Heart right ventricle (tissue), 16 donors: ENCODE measurements at regions of chr3 and their contacts with region 1.

Region 1: DNA sequence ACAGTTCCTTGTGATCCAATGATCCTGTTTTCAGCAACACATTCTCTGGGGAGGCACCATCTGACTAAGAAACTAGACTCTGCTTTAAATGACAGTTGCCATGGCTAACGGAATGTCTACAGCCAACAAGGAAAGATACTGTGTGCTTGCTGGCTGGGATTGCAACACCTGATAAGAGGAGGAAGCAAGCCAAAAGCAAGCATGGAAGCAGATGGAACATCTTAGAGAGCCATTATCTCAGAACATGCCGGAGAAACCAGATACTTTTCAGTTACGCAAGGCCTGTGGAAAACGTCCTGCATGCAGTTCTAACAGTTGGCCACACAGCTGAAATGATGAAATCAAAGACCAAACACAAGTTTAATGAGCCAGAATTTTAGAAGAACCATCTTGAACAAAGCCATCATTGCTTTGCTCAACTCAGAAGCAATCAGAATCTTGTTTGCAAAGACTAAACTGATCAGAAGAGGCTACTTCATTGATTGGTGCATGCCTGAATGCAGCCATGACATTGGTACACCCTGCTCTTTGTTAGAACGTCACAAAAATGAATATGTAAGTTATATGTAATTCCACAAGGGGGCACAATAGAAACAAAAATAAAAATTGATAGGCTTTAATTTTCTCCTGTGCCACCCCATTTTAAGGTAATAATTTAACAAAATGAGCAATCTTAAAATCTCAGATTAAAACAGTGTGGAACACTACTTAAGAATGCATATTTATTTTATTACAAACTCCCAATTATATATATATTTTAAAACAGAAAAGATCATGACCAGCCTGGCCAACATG is 50.8 kb downstream of the GXYLT2 start:
- DNase-seq: peak in 1 of 2 donors; percentile 69
- ATAC-seq: peak; percentile 84 to 96 (median 91)
- H3K4me3 ChIP-seq: no peak overlapping the region
- H3K27ac ChIP-seq: peak overlapping the region in 8 of 10 donors; percentile 2 to 61 (median 30)
- H3K4me1 ChIP-seq: peaks cover 0 to 27% (median 9%) of the 10 kb centered on the region in 9 donors
- H3K27me3 ChIP-seq: no peaks in the 10 kb centered on the region
- CTCF ChIP-seq: peak; percentile 34 to 77 (median 59)

Region 2: GRCh38 chr3:72797773-72798543 is 140.7 kb before region 1 on chr3:
- intact Hi-C with region 1: no loop called
- DNase-seq: peak; percentile 61 to 62
- ATAC-seq: peak; percentile 33 to 95 (median 80)
- H3K4me3 ChIP-seq: no peak overlapping the region
- H3K27ac ChIP-seq: peak overlapping the region in 5 of 10 donors; percentile 11 to 42 (median 29)
- H3K4me1 ChIP-seq: peaks cover 0 to 21% (median 8%) of the 10 kb centered on the region in 9 donors
- H3K27me3 ChIP-seq: no peaks in the 10 kb centered on the region
- CTCF ChIP-seq: no peak

Region 3: GRCh38 chr3:73056014-73056844 is 117.6 kb after region 1 on chr3:
- intact Hi-C with region 1: loop called in 9 of 10 experiments (anchors 1 to 5 kb)
- DNase-seq: no peak
- ATAC-seq: peak in 4 of 8 donors; percentile 55 to 82 (median 58)
- H3K4me3 ChIP-seq: no peak overlapping the region
- H3K27ac ChIP-seq: peak overlapping the region in 3 of 10 donors; percentile 23 to 33 (median 26)
- H3K4me1 ChIP-seq: peaks cover 0 to 43% (median 17%) of the 10 kb centered on the region in 9 donors
- H3K27me3 ChIP-seq: no peaks in the 10 kb centered on the region
- CTCF ChIP-seq: peak; percentile 29 to 70 (median 55)

Region 4: GRCh38 chr3:73070675-73071575 is 132.3 kb after region 1 on chr3:
- intact Hi-C with region 1: loop called in 1 of 10 experiments (anchors 5 kb)
- DNase-seq: no peak
- ATAC-seq: peak in 1 of 8 donors; percentile 15
- H3K4me3 ChIP-seq: no peak overlapping the region
- H3K27ac ChIP-seq: no peak overlapping the region
- H3K4me1 ChIP-seq: peaks cover 0 to 33% (median 14%) of the 10 kb centered on the region in 9 donors
- H3K27me3 ChIP-seq: no peaks in the 10 kb centered on the region
- CTCF ChIP-seq: no peak

Region 5: DNA sequence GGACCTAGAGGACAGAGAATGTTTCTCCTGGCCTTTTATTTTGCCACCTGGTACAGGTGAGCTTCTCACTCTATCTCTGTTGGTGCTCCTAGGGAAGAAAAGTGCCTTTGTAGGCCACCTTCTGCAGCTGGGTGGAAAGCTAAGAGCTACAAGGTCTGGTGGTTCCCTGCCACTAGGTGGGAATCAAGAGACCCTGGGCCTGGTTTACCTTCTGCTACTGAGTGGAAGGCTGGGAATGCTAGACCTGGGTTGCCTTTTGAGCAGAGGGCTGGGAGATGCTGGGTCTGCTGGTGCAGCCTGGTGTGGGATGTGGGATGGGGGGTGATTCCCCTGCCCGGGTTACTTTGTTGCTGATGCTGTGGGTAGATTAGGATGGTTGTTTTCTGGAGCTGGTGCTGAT is 195.4 kb after region 1 on chr3:
- intact Hi-C with region 1: no loop called
- DNase-seq: no peak
- ATAC-seq: no peak
- H3K4me3 ChIP-seq: no peak overlapping the region
- H3K27ac ChIP-seq: no peak overlapping the region
- H3K4me1 ChIP-seq: no peaks in the 10 kb centered on the region
- H3K27me3 ChIP-seq: no peaks in the 10 kb centered on the region
- CTCF ChIP-seq: no peak